Endothelial cell of umbilical vein (primary cell): ENCODE measurements at regions of chr20 and their contacts with region 1.

Region 1: DNA sequence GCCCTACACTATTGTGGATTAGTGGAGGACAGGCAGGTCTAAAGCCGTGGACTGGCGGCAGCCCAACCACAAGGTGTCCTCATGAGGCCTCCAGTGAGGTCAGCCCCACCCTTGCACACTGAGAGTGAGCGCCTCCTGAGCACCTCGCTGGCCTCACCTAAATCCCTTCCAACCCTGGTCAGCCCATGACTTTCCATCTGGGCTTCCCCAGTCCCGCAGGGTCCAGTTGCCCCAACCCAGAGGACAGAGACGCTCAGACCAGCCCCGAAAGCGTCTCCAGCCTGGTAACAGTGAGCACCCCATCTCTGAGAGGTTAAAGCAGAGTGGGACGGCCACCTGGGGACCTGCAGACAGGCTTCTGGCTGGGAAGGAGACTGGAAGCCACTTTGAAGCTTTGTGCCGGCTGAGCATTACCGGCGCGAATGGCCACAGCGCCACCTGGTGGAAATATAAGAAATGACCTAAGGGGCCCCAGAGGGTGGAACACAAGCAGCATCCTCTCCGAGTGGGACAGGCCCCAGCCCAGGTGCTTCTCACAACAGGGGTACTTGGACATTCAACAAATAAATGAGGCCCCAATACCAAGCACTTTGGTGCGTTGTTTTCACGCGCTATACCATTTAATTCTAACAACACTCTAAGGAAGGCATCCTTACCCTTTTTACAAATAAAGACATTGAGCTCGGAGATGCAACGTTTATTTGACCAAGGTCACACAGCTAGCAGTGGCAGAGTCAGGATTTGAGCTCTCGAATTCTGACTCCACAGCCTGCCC is 65.7 kb upstream of the TOP1 start:
- DNase-seq: peak; percentile 62
- H3K4me3 ChIP-seq: no peak overlapping the region
- H3K27ac ChIP-seq: no peak overlapping the region
- H3K4me1 ChIP-seq: no peaks in the 10 kb centered on the region
- H3K27me3 ChIP-seq: no peaks in the 10 kb centered on the region
- CTCF ChIP-seq: peak; percentile 78 to 82
- POLR2A ChIP-seq: no peak

Region 2: DNA sequence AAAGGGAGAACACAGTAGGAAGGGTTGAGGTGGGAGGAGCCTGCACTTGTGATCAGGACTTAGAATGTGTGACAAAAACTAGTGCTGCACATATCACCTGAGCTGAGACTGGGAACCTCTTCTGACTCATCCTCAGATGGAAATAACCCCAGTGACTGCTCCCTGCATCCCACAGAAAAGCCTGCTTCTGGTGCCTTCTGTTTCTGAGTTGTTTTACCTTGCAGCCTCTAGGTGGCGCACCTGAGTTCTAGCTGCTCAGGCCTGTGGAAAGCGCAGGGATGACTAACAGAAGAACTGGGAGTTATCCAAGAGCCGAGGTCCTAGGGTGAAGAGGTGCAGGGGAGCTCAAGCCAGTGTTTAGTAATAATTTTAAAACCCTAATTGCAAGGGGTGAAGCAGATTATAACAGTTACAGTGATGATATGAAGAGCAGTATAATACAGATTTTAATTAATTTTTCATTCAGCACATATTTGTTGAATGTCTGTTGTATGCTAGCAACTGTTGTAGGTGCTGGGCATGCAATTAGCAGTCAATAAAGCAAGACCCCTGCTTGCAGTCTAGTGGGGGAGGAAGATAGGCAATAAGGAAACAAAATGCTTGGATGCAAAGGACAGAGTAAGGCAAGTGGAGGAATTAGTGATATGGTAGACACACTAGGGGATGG is 1698.3 kb before region 1 on chr20:
- CTCF ChIA-PET with region 1: interaction called, 102 read pairs
- POLR2A ChIA-PET with region 1: no interaction called
- dilution Hi-C with region 1: no loop called
- intact Hi-C with region 1: loop called (anchors 2 kb)
- DNase-seq: peak; percentile 72
- H3K4me3 ChIP-seq: no peak overlapping the region
- H3K27ac ChIP-seq: no peak overlapping the region
- H3K4me1 ChIP-seq: peaks cover 4% of the 10 kb centered on the region
- H3K27me3 ChIP-seq: no peaks in the 10 kb centered on the region
- CTCF ChIP-seq: peak; percentile 87 to 93
- POLR2A ChIP-seq: no peak

Region 3: DNA sequence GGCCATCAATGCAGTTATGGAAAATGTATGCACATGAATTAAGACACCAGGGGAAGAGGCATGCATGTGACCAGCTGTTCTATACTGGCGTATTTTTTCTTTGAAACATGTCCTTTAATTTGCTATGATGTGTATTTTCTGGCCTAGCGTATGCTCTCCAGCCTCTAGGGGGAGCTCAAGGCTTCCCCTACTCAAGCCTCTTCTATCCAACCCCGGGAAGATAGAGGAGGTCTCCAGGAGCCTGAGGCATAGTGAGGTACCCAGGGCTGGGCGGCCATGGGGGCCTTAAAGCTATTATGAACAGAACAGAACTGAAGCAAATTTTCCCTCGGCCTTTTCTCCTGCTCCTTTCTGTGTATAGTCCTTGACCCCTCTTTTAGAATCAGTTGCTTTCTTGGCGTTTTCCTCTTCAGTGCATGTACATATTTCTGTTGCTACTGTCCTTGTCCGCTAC is 802.8 kb before region 1 on chr20:
- CTCF ChIA-PET with region 1: interaction called, 16 read pairs
- POLR2A ChIA-PET with region 1: no interaction called
- dilution Hi-C with region 1: no loop called
- intact Hi-C with region 1: loop called (anchors 1 kb)
- DNase-seq: peak; percentile 75
- H3K4me3 ChIP-seq: no peak overlapping the region
- H3K27ac ChIP-seq: no peak overlapping the region
- H3K4me1 ChIP-seq: no peaks in the 10 kb centered on the region
- H3K27me3 ChIP-seq: no peaks in the 10 kb centered on the region
- CTCF ChIP-seq: peak; percentile 83 to 89
- POLR2A ChIP-seq: no peak

Region 4: DNA sequence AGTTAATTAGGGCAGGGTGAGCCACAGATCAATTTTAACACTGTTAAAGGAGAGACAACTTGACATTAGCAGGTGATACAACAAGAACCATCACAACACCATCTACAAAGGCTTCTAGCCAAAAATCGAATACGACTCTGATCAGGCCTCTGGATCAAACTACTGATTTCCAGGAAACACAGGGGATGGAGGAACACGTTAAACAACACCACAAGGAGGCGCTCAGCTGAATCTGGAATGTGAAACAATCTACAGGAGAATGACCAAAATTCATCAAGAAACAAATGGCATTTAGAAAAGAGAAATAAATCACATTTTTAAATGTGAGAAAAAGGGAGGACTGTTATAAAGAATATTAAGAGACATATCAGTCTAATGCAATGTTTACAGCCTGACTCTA is 260.4 kb before region 1 on chr20:
- CTCF ChIA-PET with region 1: interaction called, 17 read pairs
- POLR2A ChIA-PET with region 1: no interaction called
- dilution Hi-C with region 1: no loop called
- intact Hi-C with region 1: loop called (anchors 1 kb)
- DNase-seq: no peak
- H3K4me3 ChIP-seq: no peak overlapping the region
- H3K27ac ChIP-seq: no peak overlapping the region
- H3K4me1 ChIP-seq: no peaks in the 10 kb centered on the region
- H3K27me3 ChIP-seq: no peaks in the 10 kb centered on the region
- CTCF ChIP-seq: no peak
- POLR2A ChIP-seq: no peak

Region 5: GRCh38 chr20:40741507-40742106 is 221.3 kb before region 1 on chr20:
- CTCF ChIA-PET with region 1: interaction called, 207 read pairs
- POLR2A ChIA-PET with region 1: no interaction called
- dilution Hi-C with region 1: no loop called
- intact Hi-C with region 1: loop called (anchors 1 kb)
- DNase-seq: peak; percentile 61
- H3K4me3 ChIP-seq: no peak overlapping the region
- H3K27ac ChIP-seq: no peak overlapping the region
- H3K4me1 ChIP-seq: no peaks in the 10 kb centered on the region
- H3K27me3 ChIP-seq: peaks cover 9 to 14% of the 10 kb centered on the region in 2 experiments
- CTCF ChIP-seq: peak; percentile 73 to 86
- POLR2A ChIP-seq: no peak

Region 6: DNA sequence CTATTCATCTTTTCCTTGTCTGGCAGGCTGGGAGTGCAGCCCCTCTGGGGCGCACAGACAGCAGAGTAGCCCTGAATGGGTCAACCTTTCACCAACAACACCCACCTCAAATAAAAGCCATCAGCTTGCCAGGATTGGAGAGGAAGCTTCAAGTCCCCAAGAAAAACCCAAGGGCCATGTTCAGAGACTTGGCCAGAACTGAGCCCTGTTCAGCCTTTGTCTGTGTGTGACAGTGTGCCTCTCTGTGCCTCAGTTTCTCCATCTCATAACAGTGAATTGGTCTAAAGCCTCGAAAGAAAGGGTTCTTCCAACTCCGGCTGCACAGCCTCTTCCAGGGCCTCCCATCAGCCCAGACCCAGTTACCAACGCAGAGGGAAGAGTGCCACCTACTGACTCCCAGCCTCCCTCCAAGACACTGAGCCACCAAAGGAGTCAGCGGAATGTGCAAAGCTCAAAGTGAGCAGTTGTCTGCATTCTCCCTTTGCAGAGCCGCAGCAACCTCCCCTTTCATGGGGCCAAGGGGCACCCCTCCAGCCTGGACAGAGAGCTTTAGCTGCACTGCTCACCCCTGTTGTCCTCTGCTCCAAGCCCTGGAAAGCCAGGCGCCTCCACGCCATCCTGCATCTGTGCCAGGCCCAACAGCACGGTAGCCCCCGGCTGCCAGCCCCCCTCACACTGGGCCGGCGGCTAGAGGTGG is 17.0 kb before region 1 on chr20:
- CTCF ChIA-PET with region 1: interaction called, 40 read pairs
- POLR2A ChIA-PET with region 1: no interaction called
- dilution Hi-C with region 1: no loop called
- intact Hi-C with region 1: no loop called
- DNase-seq: peak; percentile 56
- H3K4me3 ChIP-seq: no peak overlapping the region
- H3K27ac ChIP-seq: no peak overlapping the region
- H3K4me1 ChIP-seq: no peaks in the 10 kb centered on the region
- H3K27me3 ChIP-seq: no peaks in the 10 kb centered on the region
- CTCF ChIP-seq: peak; percentile 55 to 78
- POLR2A ChIP-seq: no peak

Region 7: DNA sequence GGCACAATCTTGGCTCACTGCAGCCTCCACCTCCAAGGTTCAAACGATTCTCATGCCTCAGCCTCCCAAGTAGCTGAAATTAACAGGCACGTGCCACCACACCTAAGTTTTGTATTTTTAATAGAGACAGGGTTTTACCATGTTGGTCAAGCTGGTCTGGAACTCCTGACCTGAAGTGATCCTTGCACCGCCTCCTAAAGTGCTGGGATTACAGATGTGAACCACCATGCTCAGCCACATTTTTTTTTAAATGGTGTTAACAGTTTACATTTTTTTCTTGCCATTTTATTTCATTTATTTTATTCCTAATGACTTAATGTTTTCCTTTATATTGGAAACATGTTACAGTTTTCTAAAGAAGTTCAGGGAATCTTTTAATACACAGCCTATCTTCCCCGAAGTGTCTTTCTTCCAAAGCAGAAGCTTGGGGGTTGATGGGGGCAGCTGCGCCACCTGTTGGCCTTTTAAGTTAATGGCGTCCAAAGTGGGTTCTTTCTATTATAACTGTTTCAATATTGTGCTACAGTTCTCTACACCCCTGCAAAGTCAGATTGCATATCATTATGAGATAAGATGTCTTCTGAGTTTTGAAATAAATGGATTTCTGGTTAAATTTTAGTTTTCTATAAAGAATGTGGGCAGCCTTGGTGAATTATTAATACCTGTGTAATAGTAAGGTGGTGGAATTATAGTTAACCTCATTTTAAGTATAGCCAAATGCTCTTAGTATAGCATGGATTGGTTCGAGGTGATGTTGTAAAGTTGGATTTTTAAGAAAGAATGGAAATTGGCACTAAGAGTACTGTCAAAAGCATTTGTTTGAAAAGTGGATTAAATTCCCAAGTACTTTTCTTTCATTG is 132.4 kb after region 1 on chr20:
- CTCF ChIA-PET with region 1: interaction called, 106 read pairs
- POLR2A ChIA-PET with region 1: no interaction called
- dilution Hi-C with region 1: no loop called
- intact Hi-C with region 1: loop called (anchors 1 kb)
- DNase-seq: peak; percentile 71
- H3K4me3 ChIP-seq: no peak overlapping the region
- H3K27ac ChIP-seq: no peak overlapping the region
- H3K4me1 ChIP-seq: peaks cover 14% of the 10 kb centered on the region
- H3K27me3 ChIP-seq: no peaks in the 10 kb centered on the region
- CTCF ChIP-seq: peak; percentile 67 to 75
- POLR2A ChIP-seq: no peak